ENCODE measurements at regions of chr6 and their contacts with region 1.

Region 1: GRCh38 chr6:11711003-11711983 is 67.3 kb downstream of the ADTRP start:
- DNase-seq: peak; percentile 67
- ATAC-seq: peak; percentile 62
- H3K4me3 ChIP-seq: peak overlapping the region; percentile 17; the same call in 1 of the 2 replicates
- H3K27ac ChIP-seq: peak overlapping the region; percentile 75
- H3K4me1 ChIP-seq: peaks cover 45% of the 10 kb centered on the region
- H3K27me3 ChIP-seq: no peaks in the 10 kb centered on the region
- CTCF ChIP-seq: no peak
- EP300 ChIP-seq: peak; percentile 73 to 78; a peak in 2 of 4 replicates
- POLR2A ChIP-seq: 0 out of 2 replicates have a peak, but pooled peaks have one; percentile 32
- RAD21 ChIP-seq: peak; percentile 15; the same call in 1 of the 2 replicates

Region 2: GRCh38 chr6:11621119-11621518 is 90.2 kb before region 1 on chr6:
- CTCF ChIA-PET with region 1: no interaction called
- POLR2A ChIA-PET with region 1: no interaction called
- RAD21 ChIA-PET with region 1: no interaction called
- SMC1A ChIA-PET with region 1: no interaction called
- in situ Hi-C with region 1: no loop called
- intact Hi-C with region 1: no loop called
- DNase-seq: no peak
- ATAC-seq: peak; percentile 36; the same call in 2 of the 3 replicates
- H3K4me3 ChIP-seq: no peak overlapping the region
- H3K27ac ChIP-seq: no peak overlapping the region
- H3K4me1 ChIP-seq: no peaks in the 10 kb centered on the region
- H3K27me3 ChIP-seq: no peaks in the 10 kb centered on the region
- CTCF ChIP-seq: no peak
- EP300 ChIP-seq: no peak
- POLR2A ChIP-seq: no peak
- RAD21 ChIP-seq: no peak

Region 3: GRCh38 chr6:11682526-11682925 is 28.8 kb before region 1 on chr6:
- CTCF ChIA-PET with region 1: no interaction called
- POLR2A ChIA-PET with region 1: no interaction called
- RAD21 ChIA-PET with region 1: no interaction called
- SMC1A ChIA-PET with region 1: no interaction called
- in situ Hi-C with region 1: no loop called
- intact Hi-C with region 1: no loop called
- DNase-seq: no peak
- ATAC-seq: no peak
- H3K4me3 ChIP-seq: no peak overlapping the region
- H3K27ac ChIP-seq: no peak overlapping the region
- H3K4me1 ChIP-seq: no peaks in the 10 kb centered on the region
- H3K27me3 ChIP-seq: no peaks in the 10 kb centered on the region
- CTCF ChIP-seq: no peak
- EP300 ChIP-seq: no peak
- POLR2A ChIP-seq: no peak
- RAD21 ChIP-seq: no peak

Region 4: GRCh38 chr6:11722805-11723631 is 11.7 kb after region 1 on chr6:
- CTCF ChIA-PET with region 1: interaction called, 56 read pairs
- POLR2A ChIA-PET with region 1: interaction called, 69 read pairs
- RAD21 ChIA-PET with region 1: interaction called, 117 read pairs
- SMC1A ChIA-PET with region 1: interaction called, 151 read pairs
- in situ Hi-C with region 1: no loop called
- intact Hi-C with region 1: loop called (anchors 1 kb)
- DNase-seq: no peak
- ATAC-seq: peak; percentile 78
- H3K4me3 ChIP-seq: peak overlapping the region; percentile 63
- H3K27ac ChIP-seq: peak overlapping the region; percentile 88
- H3K4me1 ChIP-seq: peaks cover 8% of the 10 kb centered on the region
- H3K27me3 ChIP-seq: no peaks in the 10 kb centered on the region
- CTCF ChIP-seq: no peak
- EP300 ChIP-seq: no peak
- POLR2A ChIP-seq: no peak; the same call in 1 of the 2 replicates
- RAD21 ChIP-seq: 0 out of 2 replicates have a peak, but pooled peaks have one; percentile 4

Region 5: DNA sequence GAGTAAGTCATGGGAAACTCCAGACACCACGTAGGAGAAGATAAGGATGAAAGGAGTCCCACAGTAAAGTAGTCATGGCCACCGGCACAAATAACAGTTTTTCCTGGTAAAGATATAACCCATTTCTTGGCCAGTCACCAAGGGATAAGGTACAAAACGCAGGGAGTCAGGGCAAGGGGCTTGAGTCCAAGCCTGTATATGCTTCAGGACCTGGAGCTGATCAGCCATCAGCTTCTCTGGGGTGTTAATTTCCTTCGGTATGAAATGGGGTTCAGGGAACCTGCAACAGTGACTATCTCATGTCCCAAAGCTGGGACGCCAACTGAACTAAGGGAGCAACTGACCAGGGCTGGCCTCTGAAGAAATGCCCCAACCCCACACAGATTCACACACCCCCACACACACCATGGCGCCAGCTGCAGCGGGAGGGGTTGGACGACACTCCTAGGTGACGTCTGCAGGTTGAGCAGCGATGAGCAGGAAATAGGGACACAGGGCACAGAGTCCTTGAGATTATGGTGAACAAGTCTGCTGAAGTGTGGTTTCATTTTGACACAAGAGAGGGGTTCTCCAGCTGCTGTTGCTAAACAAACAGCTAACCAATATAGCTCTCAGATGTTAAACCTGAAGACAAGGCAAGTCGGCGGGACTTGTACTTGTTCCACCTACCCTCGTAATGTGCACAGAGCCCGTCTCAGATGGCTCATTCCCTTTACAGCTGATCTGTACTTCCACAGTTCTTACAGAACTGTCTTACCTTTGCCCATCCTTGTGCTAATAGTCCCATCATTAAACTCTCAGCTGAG is 74.7 kb after region 1 on chr6:
- CTCF ChIA-PET with region 1: interaction called, 13 read pairs
- POLR2A ChIA-PET with region 1: interaction called, 41 read pairs
- RAD21 ChIA-PET with region 1: interaction called, 50 read pairs
- SMC1A ChIA-PET with region 1: interaction called, 52 read pairs
- in situ Hi-C with region 1: no loop called
- intact Hi-C with region 1: loop called (anchors 5 kb)
- DNase-seq: peak; percentile 93
- ATAC-seq: peak; percentile 93
- H3K4me3 ChIP-seq: peak overlapping the region; percentile 46
- H3K27ac ChIP-seq: peak overlapping the region; percentile 89
- H3K4me1 ChIP-seq: peaks cover 25% of the 10 kb centered on the region
- H3K27me3 ChIP-seq: no peaks in the 10 kb centered on the region
- CTCF ChIP-seq: no peak
- EP300 ChIP-seq: peak; percentile 83 to 92
- POLR2A ChIP-seq: peak; percentile 66
- RAD21 ChIP-seq: peak; percentile 27; the same call in 1 of the 2 replicates

Region 6: GRCh38 chr6:11833626-11834592 is 122.6 kb after region 1 on chr6:
- CTCF ChIA-PET with region 1: interaction called, 7 read pairs
- POLR2A ChIA-PET with region 1: interaction called, 6 read pairs
- RAD21 ChIA-PET with region 1: interaction called, 93 read pairs
- SMC1A ChIA-PET with region 1: interaction called, 42 read pairs
- in situ Hi-C with region 1: loop called (anchors 5 kb)
- intact Hi-C with region 1: loop called (anchors 2 kb)
- DNase-seq: peak; percentile 84
- ATAC-seq: peak; percentile 84
- H3K4me3 ChIP-seq: peak overlapping the region; percentile 0; the same call in 1 of the 2 replicates
- H3K27ac ChIP-seq: peak overlapping the region; percentile 95
- H3K4me1 ChIP-seq: peaks cover 45% of the 10 kb centered on the region
- H3K27me3 ChIP-seq: no peaks in the 10 kb centered on the region
- CTCF ChIP-seq: no peak
- EP300 ChIP-seq: peak; percentile 97 to 100
- POLR2A ChIP-seq: peak; percentile 41; the same call in 1 of the 2 replicates
- RAD21 ChIP-seq: peak; percentile 42; the same call in 1 of the 2 replicates

Region 7: DNA sequence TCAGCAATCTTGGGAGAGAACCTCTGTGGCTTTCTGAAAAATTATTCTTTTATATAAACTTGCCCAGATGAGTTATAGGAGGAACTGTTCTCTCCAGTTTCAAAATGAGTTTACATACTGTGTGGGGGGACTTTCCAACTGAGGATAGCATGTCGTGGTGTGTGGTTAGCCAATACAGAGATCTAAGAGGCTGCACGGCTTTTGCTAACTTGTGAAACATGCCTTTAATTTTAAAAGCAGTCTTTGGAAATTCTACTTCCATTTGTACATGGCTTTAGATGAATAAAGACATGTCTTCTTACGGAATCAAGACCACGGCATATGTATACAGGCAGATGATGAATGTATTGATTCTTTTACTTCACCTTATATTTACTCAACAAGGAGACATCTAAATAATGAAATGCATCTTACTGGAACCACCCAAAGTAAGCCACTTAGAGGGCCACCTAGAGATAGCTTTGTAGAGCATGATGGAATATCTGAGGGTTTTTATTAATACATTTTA is 340.6 kb after region 1 on chr6:
- CTCF ChIA-PET with region 1: no interaction called
- POLR2A ChIA-PET with region 1: interaction called, 3 read pairs
- RAD21 ChIA-PET with region 1: interaction called, 10 read pairs
- SMC1A ChIA-PET with region 1: interaction called, 13 read pairs
- in situ Hi-C with region 1: no loop called
- intact Hi-C with region 1: no loop called
- DNase-seq: peak; percentile 92
- ATAC-seq: peak; percentile 76
- H3K4me3 ChIP-seq: 0 out of 2 replicates have a peak overlapping the region, but pooled peaks have one; percentile 11
- H3K27ac ChIP-seq: peak overlapping the region; percentile 98
- H3K4me1 ChIP-seq: peaks cover 47% of the 10 kb centered on the region
- H3K27me3 ChIP-seq: no peaks in the 10 kb centered on the region
- CTCF ChIP-seq: peak in 1 of 3 experiments; percentile 6; a peak in 1 of 6 replicates
- EP300 ChIP-seq: peak; percentile 95 to 98
- POLR2A ChIP-seq: no peak
- RAD21 ChIP-seq: 0 out of 2 replicates have a peak, but pooled peaks have one; percentile 7

Region 8: GRCh38 chr6:12113190-12113577 is 401.9 kb after region 1 on chr6:
- CTCF ChIA-PET with region 1: no interaction called
- POLR2A ChIA-PET with region 1: interaction called, 3 read pairs
- RAD21 ChIA-PET with region 1: interaction called, 10 read pairs
- SMC1A ChIA-PET with region 1: interaction called, 6 read pairs
- in situ Hi-C with region 1: no loop called
- intact Hi-C with region 1: no loop called
- DNase-seq: no peak
- ATAC-seq: peak; percentile 60
- H3K4me3 ChIP-seq: peak overlapping the region; percentile 32; the same call in 1 of the 2 replicates
- H3K27ac ChIP-seq: peak overlapping the region; percentile 88
- H3K4me1 ChIP-seq: peaks cover 49% of the 10 kb centered on the region
- H3K27me3 ChIP-seq: no peaks in the 10 kb centered on the region
- CTCF ChIP-seq: no peak
- EP300 ChIP-seq: no peak
- POLR2A ChIP-seq: peak; percentile 41; the same call in 1 of the 2 replicates
- RAD21 ChIP-seq: no peak

Measured in GM12878 (cell line).